Left lung (tissue), 14 donors: ENCODE measurements at regions of chr2 and their contacts with region 1.

Region 1: DNA sequence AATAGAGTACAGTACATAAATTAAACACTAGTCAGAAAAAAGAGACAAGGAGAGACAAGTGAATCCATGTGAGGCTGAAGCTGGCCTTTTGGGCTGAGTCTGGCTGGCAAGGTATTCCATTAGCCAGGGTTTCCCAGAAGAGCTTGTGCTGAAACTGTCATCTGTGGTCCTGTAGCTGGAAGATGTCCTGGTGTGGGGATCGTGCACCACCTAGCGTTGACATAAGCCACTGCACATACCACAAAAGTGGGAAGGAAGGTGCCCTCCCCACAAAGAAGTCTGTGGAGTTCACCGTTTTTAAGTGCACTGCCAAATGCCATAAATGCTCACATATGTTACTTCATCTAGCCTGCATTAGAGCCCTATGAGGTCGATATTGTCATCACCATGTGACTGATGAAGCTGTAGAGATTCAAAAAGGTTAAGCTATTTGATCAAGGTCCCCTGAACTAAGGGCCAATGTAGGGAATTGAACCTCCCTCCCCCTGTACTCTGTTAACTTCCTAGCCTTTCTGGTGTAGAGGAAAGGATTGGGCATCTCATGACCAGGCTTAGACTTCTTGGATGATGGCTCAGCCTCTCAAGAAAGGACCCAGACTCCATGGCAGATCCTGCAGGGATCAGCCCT is 31.9 kb upstream of the GALNT14 start:
- DNase-seq: peak in 3 of 4 donors; percentile 50 to 66 (median 51)
- ATAC-seq: peak; percentile 98
- H3K4me3 ChIP-seq: no peak overlapping the region
- H3K27ac ChIP-seq: no peak overlapping the region
- H3K4me1 ChIP-seq: no peaks in the 10 kb centered on the region
- H3K27me3 ChIP-seq: no peaks in the 10 kb centered on the region
- CTCF ChIP-seq: peak; percentile 88 to 92

Region 2: DNA sequence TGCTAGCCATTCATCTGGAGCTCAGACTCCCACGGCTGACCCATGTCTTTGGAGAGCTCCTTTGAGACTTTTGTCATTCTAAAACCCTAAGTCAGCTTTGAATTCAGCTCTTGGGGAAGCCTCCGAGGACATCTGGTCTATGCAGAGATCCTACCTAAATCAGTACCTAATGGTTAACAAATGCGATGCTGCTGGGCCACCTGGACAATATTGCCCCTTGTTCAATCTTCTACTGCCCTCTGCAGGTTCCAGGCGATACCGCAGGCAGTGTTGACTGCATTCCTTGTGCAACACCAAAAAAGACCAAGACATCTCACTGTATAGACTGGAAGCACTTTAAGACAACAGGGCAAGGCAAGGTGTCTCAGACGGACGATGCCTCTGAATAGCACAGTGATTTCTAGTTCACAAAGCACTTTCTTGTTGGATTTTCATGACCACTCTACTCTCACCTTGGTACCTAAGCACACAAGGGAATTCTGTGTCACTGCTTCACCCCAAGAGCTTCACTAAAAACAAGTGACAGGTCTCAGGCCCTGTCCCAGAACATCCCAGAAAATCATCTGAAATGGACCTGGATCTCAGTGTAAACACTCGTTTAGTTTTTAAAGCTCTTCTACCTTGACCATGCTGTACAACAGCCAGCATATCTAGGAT is 163.5 kb after region 1 on chr2:
- intact Hi-C with region 1: loop called in 1 of 2 experiments (anchors 10 kb)
- DNase-seq: peak in 3 of 4 donors; percentile 53 to 75 (median 73)
- ATAC-seq: peak; percentile 97
- H3K4me3 ChIP-seq: no peak overlapping the region
- H3K27ac ChIP-seq: no peak overlapping the region
- H3K4me1 ChIP-seq: no peaks in the 10 kb centered on the region
- H3K27me3 ChIP-seq: no peaks in the 10 kb centered on the region
- CTCF ChIP-seq: peak; percentile 95